ENCODE measurements at regions of chr13 and their contacts with region 1.

Region 1: DNA sequence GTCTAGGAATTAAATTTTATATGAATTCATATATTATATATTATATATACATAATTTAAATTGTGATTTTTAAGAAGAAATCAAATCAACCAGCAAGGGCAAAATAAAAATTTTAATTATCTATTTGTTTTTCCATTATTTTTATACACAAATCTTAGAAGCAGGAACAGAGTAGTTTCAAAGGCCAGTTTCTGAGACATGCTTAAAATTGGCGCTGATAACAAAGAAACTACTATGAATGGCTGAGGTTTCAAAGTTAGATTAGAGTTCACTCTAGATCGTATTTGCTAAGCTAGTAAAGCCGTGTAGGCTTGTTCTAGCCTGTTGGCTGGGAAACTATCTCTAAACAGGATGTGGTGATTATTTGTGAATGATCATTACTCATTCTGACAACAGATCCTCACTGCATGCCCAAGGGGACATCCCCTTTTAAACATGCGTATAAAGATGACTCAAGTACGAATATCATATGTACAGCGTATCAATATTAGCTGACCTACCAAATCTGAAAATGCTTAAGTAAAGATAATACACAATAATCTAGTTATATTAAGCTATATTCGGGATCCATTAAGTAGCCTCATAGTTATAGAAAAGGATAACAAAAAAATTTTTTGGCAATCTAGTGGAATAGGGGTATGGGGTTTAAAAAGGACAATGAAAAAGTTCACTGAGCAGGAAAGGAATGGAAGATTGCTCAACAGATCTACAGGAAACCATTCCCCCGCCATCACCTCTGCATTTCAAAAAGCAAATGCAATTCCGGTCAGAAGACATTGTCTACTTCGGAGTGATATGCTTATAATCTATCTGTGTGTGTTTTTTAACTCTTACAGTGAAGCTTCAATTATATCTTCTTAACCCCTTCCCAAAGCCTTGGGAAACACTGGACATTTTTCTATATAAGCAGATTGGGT is 150.1 kb downstream of the SHISA2 start:
- DNase-seq: peak in 1 of 2 donors; percentile 86
- ATAC-seq: peak; percentile 94 to 98 (median 97)
- H3K4me3 ChIP-seq: no peak overlapping the region
- H3K4me3 Mint-ChIP-seq: no peak overlapping the region
- H3K27ac ChIP-seq: no peak overlapping the region
- H3K27ac Mint-ChIP-seq: no peak overlapping the region
- H3K4me1 ChIP-seq: peaks cover 19% of the 10 kb centered on the region
- H3K4me1 Mint-ChIP-seq: peaks cover 25% of the 10 kb centered on the region in 2 donors
- H3K27me3 ChIP-seq: no peaks in the 10 kb centered on the region
- H3K27me3 Mint-ChIP-seq: peaks cover 0 to 10% of the 10 kb centered on the region in 2 donors
- CTCF ChIP-seq: no peak

Region 2: DNA sequence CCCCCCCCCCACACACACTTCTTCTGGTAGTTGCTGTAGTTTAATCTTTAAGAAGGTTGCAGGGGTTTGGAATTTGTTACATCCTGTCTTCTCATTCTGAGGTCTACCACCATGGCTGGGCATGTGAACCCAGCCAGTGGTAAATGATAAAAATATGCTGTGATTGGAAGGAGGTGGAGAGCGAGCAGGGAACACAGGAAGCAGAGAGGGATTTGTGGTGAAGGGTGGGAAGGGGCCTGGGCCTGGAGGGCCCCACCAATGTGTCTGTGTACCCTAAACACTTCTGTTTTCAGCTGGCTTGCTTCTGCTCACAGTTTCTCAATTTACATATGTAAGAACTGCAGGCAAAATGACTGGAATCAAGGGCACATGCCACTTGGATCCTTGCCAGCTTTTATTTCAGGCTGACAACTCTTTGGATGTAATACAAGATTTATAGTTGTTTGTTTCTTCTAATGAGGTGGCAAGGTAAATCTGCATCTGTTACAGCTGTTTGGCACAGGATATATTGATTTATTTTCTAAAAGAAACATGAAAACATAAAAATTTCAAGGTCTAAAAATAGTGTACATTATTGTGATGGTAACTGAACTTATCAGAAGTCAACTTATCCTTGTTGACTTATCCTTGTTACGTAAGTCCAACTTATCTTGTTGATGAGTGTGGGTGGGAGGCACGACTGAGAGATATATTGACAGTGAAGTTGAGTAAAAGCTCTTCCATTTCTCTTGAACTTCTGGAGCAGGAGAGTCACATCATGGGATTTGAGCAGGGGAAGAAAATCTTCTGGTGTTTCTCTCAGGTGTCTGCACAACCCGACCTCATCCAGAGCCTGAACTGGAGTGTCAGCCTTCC is 163.1 kb before region 1 on chr13:
- intact Hi-C with region 1: loop called (anchors 10 kb)
- DNase-seq: peak; percentile 38 to 39
- ATAC-seq: peak; percentile 67 to 68 (median 68)
- H3K4me3 ChIP-seq: no peak overlapping the region
- H3K4me3 Mint-ChIP-seq: peak overlapping the region; percentile 65
- H3K27ac ChIP-seq: peak overlapping the region; percentile 72
- H3K27ac Mint-ChIP-seq: peak overlapping the region; percentile 83
- H3K4me1 ChIP-seq: peaks cover 18% of the 10 kb centered on the region
- H3K4me1 Mint-ChIP-seq: peaks cover 27 to 38% of the 10 kb centered on the region in 2 donors
- H3K27me3 ChIP-seq: no peaks in the 10 kb centered on the region
- H3K27me3 Mint-ChIP-seq: no peaks in the 10 kb centered on the region
- CTCF ChIP-seq: no peak

Region 3: DNA sequence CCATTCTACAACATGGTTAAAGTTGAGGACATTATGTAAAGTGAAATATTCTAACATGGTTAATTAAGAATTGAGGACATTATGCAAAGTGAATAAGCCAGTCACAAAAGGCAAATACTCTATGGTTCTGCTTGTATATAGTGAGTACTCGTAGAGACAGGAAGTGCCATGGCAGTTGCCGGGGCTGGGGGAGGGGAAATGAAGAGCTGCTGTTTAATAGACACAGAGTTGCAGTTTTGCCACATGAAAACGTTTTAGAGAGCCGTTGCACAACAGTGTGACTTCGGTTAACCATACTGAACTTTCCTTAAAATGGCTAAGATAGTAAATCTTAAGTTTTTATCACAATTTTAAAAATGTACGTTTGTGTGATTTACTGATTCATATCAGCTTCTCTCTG is 26.8 kb before region 1 on chr13:
- intact Hi-C with region 1: loop called (anchors 1 kb)
- DNase-seq: peak; percentile 35 to 81
- ATAC-seq: peak; percentile 83 to 91 (median 87)
- H3K4me3 ChIP-seq: no peak overlapping the region
- H3K4me3 Mint-ChIP-seq: peak overlapping the region; percentile 18
- H3K27ac ChIP-seq: peak overlapping the region; percentile 53
- H3K27ac Mint-ChIP-seq: peak overlapping the region; percentile 17 to 71
- H3K4me1 ChIP-seq: peaks cover 12% of the 10 kb centered on the region
- H3K4me1 Mint-ChIP-seq: peaks cover 20 to 28% of the 10 kb centered on the region in 2 donors
- H3K27me3 ChIP-seq: no peaks in the 10 kb centered on the region
- H3K27me3 Mint-ChIP-seq: no peaks in the 10 kb centered on the region
- CTCF ChIP-seq: no peak

Region 4: DNA sequence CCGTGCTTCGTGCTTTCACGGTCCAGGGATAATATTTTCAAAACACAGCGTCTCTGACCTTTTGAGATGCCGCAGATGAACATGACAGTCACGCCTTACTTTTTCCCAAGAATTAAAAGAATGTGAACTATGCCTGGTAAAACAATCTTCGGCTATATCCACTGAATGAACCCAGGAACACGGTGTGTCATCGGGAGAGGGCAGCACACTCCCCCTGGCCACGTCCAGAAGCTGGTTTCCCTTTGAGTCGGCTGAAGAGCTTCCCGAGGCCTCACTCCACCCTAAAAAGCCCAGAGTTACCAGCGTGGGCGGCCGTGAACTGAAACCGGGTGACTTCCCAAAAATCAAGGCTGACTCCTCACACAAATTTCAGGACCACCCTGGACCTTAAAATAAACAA is 173.0 kb after region 1 on chr13:
- intact Hi-C with region 1: no loop called
- DNase-seq: no peak
- ATAC-seq: no peak
- H3K4me3 ChIP-seq: no peak overlapping the region
- H3K4me3 Mint-ChIP-seq: no peak overlapping the region
- H3K27ac ChIP-seq: no peak overlapping the region
- H3K27ac Mint-ChIP-seq: no peak overlapping the region
- H3K4me1 ChIP-seq: no peaks in the 10 kb centered on the region
- H3K4me1 Mint-ChIP-seq: no peaks in the 10 kb centered on the region
- H3K27me3 ChIP-seq: no peaks in the 10 kb centered on the region
- H3K27me3 Mint-ChIP-seq: peaks cover 16 to 30% of the 10 kb centered on the region in 2 donors
- CTCF ChIP-seq: no peak

Measured in natural killer cell (primary cell).